H1 (cell line): ENCODE measurements at regions of chr12 and their contacts with region 1.

Region 1: GRCh38 chr12:56645717-56646446 is at the start of gene ATP5F1B:
- DNase-seq: peak; percentile 88 to 96
- H3K4me3 ChIP-seq: peak within 1 kb of the TSS; percentile 90 to 99 (median 97)
- H3K27ac ChIP-seq: peak within 1 kb of the TSS; percentile 95
- H3K4me1 ChIP-seq: no peaks in the 10 kb centered on the region
- H3K27me3 ChIP-seq: no peaks in the 10 kb centered on the region
- CTCF ChIP-seq: no peak
- EP300 ChIP-seq: no peak
- POLR2A ChIP-seq: peak; percentile 98 to 99
- RAD21 ChIP-seq: no peak
- total RNA-seq, gene ATP5F1B: 900 and 930 TPM in 2 replicates

Region 2: DNA sequence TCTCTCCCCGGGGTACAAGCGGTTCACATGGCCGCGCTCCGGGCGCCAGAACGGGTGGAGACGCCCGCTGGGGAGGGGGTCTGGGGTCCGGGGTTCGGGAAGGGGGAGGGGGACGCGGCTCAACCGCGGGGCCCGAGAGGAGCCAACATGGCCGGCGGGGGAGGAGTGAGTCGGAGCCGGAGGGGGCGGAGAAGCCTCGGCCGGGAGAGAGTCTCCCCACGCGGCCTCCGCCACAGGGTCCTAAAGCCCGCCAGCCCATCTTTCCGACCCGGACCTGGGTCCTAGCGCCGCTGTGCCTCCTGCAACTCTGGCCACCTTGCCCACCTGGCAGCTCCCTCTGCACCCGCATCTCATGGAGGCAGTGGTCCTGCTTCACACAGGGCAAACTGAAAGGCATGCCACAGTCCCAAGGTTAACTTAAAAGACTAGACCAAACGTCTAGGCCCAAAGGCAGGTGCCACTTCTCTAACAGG is 15.7 kb before region 1 on chr12 and contains the start of gene BAZ2A:
- CTCF ChIA-PET with region 1: interaction called, 5 read pairs
- POLR2A ChIA-PET with region 1: interaction called, 60 read pairs
- DNase-seq: peak in 1 of 2 experiments; percentile 93
- H3K4me3 ChIP-seq: peak within 1 kb of the TSS; percentile 65 to 93 (median 88)
- H3K27ac ChIP-seq: peak within 1 kb of the TSS; percentile 50; the same call in 1 of the 2 replicates
- H3K4me1 ChIP-seq: peaks cover 14 to 32% (median 24%) of the 10 kb centered on the region in 4 experiments
- H3K27me3 ChIP-seq: no peaks in the 10 kb centered on the region
- CTCF ChIP-seq: no peak
- EP300 ChIP-seq: peak; percentile 23 to 82; a peak in 2 of 3 replicates
- POLR2A ChIP-seq: no peak
- RAD21 ChIP-seq: no peak
- total RNA-seq, gene BAZ2A: 110 TPM in 2 replicates

Region 3: DNA sequence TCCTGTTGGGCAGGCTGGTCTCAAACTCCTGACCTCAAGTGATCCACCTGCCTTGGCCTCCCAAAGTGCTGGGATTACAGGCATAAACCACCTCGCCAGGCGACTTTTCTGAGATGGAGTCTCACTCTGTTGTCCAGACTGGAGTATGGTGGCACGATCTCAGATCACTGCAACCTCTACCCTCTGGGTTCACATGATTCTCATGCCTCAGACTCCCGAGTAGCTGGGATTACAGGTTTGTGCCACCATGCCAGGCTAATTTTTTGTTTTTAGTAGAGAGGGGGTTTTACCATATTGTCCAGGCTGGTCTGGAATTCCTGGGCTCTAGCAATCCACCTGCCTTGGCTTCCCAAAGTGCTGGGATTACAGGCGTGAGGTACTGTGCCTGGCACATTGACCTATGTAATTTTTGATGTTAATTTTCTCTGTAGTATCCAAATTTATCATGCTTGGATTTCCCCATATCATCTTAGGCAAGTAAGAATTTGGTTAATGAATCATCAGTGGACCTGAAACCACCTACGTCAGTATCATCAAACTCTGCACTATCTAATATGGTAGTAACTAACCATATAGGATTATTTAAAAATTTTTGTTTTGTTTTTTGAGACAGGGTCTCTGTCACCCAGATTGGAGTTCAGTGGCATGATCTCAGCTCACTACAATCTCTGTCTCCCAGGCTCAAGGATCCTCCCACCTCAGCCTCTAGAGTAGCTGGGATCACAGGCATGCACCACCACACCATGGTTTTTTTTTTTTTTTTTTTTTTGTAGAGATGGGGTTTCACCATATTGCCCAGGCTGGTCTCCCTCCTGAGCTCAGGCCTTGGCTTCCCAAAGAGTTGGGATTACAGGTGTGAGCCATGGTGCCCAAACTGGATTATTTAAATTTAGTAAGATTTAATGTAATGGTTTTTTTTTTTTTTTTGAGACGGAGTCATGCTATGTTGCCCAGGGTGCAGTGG is 11.8 kb after region 1 on chr12:
- CTCF ChIA-PET with region 1: no interaction called
- POLR2A ChIA-PET with region 1: interaction called, 130 read pairs
- DNase-seq: no peak
- H3K4me3 ChIP-seq: no peak overlapping the region
- H3K27ac ChIP-seq: no peak overlapping the region
- H3K4me1 ChIP-seq: no peaks in the 10 kb centered on the region
- H3K27me3 ChIP-seq: no peaks in the 10 kb centered on the region
- CTCF ChIP-seq: no peak
- EP300 ChIP-seq: no peak
- POLR2A ChIP-seq: no peak
- RAD21 ChIP-seq: no peak

Region 4: DNA sequence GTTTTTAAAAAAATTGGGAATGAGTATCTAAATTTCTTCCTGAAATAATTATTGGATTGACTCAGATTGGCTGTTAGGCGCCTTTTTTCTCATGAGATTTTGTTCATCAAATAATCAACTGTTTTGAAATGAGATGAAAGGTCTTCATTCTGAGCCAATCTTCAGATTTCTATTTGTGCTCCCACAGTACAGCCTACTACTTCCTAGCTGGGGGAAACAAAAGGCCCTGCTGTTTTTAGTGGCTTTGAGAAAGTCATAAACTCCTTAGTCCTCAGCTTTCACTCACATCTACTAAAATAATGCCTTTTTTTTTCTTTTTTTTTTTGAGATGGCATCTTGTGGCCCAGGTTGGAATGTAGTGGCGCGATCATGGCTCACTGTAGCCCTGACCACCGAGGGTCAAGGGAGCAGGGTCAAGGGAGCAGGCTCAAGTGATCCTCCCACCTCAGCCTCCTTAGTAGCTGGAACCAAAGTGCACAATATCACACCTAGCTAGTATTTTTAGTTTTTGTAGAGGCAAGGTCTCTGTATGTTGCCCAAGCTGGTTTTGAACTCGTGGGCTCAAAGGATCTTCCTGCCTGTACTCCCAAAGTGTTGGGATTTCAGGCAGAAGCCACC is 64.0 kb after region 1 on chr12:
- CTCF ChIA-PET with region 1: no interaction called
- POLR2A ChIA-PET with region 1: interaction called, 22 read pairs
- DNase-seq: no peak
- H3K4me3 ChIP-seq: no peak overlapping the region
- H3K27ac ChIP-seq: no peak overlapping the region
- H3K4me1 ChIP-seq: no peaks in the 10 kb centered on the region
- H3K27me3 ChIP-seq: no peaks in the 10 kb centered on the region
- CTCF ChIP-seq: no peak
- EP300 ChIP-seq: no peak
- POLR2A ChIP-seq: no peak
- RAD21 ChIP-seq: no peak